PC-9 (cell line): ENCODE measurements at regions of chr7 and their contacts with region 1.

Region 1: DNA sequence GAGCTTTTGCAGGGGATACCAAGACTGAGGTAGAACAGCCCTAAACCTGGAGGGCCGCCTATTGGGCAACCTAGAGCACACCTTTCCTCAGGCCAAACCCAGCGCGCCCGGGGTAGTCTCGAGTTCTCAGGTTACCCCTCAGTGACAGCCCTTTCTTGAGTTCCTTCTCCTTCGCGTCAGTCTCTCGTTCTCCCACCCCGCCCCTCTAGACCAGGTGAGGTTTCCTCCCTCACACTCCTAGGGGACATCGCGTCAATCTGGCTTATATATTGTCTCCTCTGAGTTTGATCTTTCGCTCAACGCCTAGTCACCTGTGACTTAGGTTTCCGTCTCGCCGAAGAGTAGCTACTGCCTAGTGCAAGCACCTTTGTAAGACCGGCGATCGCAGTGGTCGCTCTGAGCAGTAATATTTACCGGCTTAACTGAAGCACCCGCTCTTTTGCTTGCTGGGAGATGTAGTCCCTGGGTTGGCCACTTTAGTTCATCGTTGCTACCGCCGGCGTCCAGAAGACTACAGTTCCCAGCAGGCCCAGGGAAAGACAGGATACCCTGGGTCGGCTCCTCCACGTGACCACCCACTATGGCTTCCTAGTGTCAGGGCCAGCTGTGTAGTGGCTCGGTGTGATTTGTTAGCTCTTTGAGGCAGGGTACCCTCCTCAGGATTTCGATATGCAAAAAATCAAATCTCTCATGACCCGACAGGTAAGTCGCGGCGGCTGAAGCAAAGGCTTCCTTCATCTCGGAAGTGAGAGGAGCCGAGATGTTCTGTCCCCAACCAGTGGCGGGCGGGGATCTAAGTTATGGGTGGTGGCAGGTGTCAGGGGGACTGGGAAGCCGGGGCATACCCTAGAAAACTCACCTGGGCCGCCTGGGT is at the start of gene VPS50:
- DNase-seq: peak; percentile 95 to 96
- H3K4me3 ChIP-seq: peak within 1 kb of the TSS; percentile 70
- H3K27ac ChIP-seq: peak within 1 kb of the TSS; percentile 86
- H3K4me1 ChIP-seq: peaks cover 14% of the 10 kb centered on the region; the same call in 1 of the 2 replicates
- H3K27me3 ChIP-seq: no peaks in the 10 kb centered on the region
- CTCF ChIP-seq: peak; percentile 21; the same call in 1 of the 2 replicates
- total RNA-seq, gene VPS50: 20.3 and 32.2 TPM in 2 replicates

Region 2: GRCh38 chr7:92461027-92462003 is 770.7 kb before region 1 on chr7:
- CTCF ChIA-PET with region 1: no interaction called
- POLR2A ChIA-PET with region 1: no interaction called
- intact Hi-C with region 1: loop called (anchors 5 kb)
- DNase-seq: peak in 1 of 2 experiments; percentile 29
- H3K4me3 ChIP-seq: no peak overlapping the region
- H3K27ac ChIP-seq: no peak overlapping the region
- H3K4me1 ChIP-seq: peaks cover 34% of the 10 kb centered on the region
- H3K27me3 ChIP-seq: no peaks in the 10 kb centered on the region
- CTCF ChIP-seq: peak; percentile 81

Region 3: DNA sequence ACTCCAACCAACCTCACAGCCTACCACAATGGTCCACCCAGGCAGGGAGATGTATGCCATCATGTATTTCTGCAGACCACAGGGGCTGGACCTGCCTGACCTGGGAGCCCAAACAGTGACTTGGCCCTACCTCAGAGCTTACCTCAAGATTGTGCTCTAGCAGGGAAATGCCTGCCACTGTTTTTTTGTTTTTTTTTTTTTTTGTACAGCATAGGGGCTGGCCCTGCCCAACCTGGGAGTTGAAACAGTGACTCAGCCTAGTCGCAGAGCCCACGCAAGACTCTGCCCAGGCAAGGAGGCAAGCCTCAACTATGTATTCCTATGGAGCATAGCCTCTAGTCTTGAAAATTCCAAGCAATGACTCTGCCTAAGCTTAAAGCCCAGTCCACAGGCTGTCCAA is 356.3 kb before region 1 on chr7:
- CTCF ChIA-PET with region 1: no interaction called
- POLR2A ChIA-PET with region 1: interaction called, 11 read pairs
- intact Hi-C with region 1: no loop called
- DNase-seq: no peak
- H3K4me3 ChIP-seq: no peak overlapping the region
- H3K27ac ChIP-seq: no peak overlapping the region
- H3K4me1 ChIP-seq: no peaks in the 10 kb centered on the region
- H3K27me3 ChIP-seq: no peaks in the 10 kb centered on the region
- CTCF ChIP-seq: no peak

Region 4: DNA sequence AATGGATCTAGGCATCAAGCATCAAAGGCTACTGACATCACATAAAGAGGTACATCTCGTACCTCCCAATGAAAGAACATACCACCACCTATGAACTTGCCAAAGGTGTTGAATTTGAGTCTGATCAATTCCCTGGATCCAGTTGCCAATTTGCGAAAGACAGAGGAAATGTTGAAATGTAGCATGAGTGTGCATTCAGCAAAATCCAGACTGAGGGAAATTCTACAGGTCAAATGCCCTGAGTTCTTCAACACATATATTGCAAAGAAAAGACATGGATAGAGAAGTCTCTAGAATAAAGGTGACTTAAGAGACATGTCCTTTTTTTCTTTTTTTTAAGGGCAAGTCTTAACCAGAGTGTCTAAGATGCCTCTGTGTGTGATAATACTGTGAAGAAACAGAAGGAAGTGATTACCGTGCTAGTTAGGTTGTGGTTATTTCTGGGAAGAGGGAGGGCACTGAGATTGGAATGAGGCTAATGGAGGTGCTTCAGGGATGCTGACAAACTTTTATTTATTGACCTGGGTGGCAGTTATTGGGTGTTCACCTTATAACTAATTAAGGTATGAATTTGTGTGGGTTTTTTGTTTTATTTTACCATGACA is 243.0 kb before region 1 on chr7:
- CTCF ChIA-PET with region 1: no interaction called
- POLR2A ChIA-PET with region 1: no interaction called
- intact Hi-C with region 1: no loop called
- DNase-seq: no peak
- H3K4me3 ChIP-seq: no peak overlapping the region
- H3K27ac ChIP-seq: no peak overlapping the region
- H3K4me1 ChIP-seq: no peaks in the 10 kb centered on the region
- H3K27me3 ChIP-seq: no peaks in the 10 kb centered on the region
- CTCF ChIP-seq: no peak

Region 5: GRCh38 chr7:93055543-93056107 is 176.4 kb before region 1 on chr7:
- CTCF ChIA-PET with region 1: no interaction called
- POLR2A ChIA-PET with region 1: no interaction called
- intact Hi-C with region 1: loop called (anchors 2 kb)
- DNase-seq: peak in 1 of 2 experiments; percentile 50
- H3K4me3 ChIP-seq: no peak overlapping the region
- H3K27ac ChIP-seq: no peak overlapping the region
- H3K4me1 ChIP-seq: no peaks in the 10 kb centered on the region
- H3K27me3 ChIP-seq: no peaks in the 10 kb centered on the region
- CTCF ChIP-seq: peak; percentile 87

Region 6: GRCh38 chr7:93185303-93186027 is 46.6 kb before region 1 on chr7:
- CTCF ChIA-PET with region 1: no interaction called
- POLR2A ChIA-PET with region 1: no interaction called
- intact Hi-C with region 1: no loop called
- DNase-seq: no peak
- H3K4me3 ChIP-seq: no peak overlapping the region
- H3K27ac ChIP-seq: no peak overlapping the region
- H3K4me1 ChIP-seq: no peaks in the 10 kb centered on the region
- H3K27me3 ChIP-seq: no peaks in the 10 kb centered on the region
- CTCF ChIP-seq: no peak